Activated B cell treated with CpG ODN at 0.5 μM for 24 hours (primary cell): ENCODE measurements at regions of chr6 and their contacts with region 1.

Region 1: GRCh38 chr6:27177485-27178406 is 69.8 kb upstream of the PRSS16 start:
- DNase-seq: peak; percentile 64
- ATAC-seq: peak; percentile 82
- H3K4me3 Mint-ChIP-seq: peak overlapping the region; percentile 98
- H3K27ac Mint-ChIP-seq: peak overlapping the region; percentile 92
- H3K4me1 Mint-ChIP-seq: peaks cover 12% of the 10 kb centered on the region
- H3K27me3 Mint-ChIP-seq: peaks cover 5% of the 10 kb centered on the region
- CTCF ChIP-seq: no peak

Region 2: GRCh38 chr6:26537846-26538571 is 639.7 kb before region 1 on chr6 and contains the start of gene HMGN4:
- CTCF ChIA-PET with region 1: no interaction called
- POLR2A ChIA-PET with region 1: no interaction called
- intact Hi-C with region 1: loop called (anchors 1 kb)
- DNase-seq: peak; percentile 73
- ATAC-seq: peak; percentile 67
- H3K4me3 Mint-ChIP-seq: peak within 1 kb of the TSS; percentile 98
- H3K27ac Mint-ChIP-seq: peak within 1 kb of the TSS; percentile 97
- H3K4me1 Mint-ChIP-seq: peaks cover 65% of the 10 kb centered on the region
- H3K27me3 Mint-ChIP-seq: peaks cover 7% of the 10 kb centered on the region
- CTCF ChIP-seq: no peak
- total RNA-seq, gene HMGN4: 74.5 and 82.2 TPM in 2 replicates

Region 3: DNA sequence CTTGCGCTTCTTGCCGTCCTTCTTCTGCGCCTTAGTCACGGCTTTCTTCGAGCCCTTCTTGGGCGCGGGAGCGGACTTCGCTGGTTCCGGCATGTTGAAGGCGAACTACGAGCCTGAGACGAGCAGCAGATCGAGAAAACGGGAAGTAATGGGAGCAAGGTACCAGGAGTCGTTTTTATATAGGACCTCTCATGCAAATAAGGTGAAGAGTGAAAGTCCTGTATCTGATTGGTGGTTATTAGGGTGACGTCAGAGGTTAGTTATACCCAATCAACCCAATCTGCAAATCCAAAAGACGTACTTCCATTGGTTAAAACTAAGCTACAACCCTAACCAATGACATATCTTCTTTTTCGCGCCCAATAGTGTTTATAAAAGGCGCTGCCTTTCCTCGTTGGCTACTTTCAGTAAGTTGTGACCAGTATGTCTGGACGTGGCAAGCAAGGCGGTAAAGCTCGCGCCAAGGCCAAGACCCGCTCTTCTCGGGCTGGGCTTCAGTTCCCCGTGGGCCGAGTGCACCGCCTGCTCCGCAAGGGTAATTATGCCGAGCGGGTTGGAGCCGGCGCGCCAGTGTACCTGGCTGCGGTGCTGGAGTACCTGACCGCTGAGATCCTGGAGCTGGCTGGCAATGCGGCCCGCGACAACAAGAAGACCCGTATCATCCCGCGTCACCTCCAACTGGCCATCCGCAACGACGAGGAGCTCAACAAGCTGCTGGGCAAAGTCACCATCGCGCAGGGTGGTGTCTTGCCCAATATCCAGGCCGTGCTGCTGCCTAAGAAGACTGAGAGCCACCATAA is 30.8 kb before region 1 on chr6:
- CTCF ChIA-PET with region 1: interaction called, 3 read pairs
- POLR2A ChIA-PET with region 1: interaction called, 64 read pairs
- intact Hi-C with region 1: no loop called
- DNase-seq: peak; percentile 70
- ATAC-seq: peak; percentile 80
- H3K4me3 Mint-ChIP-seq: no peak overlapping the region
- H3K27ac Mint-ChIP-seq: no peak overlapping the region
- H3K4me1 Mint-ChIP-seq: peaks cover 26% of the 10 kb centered on the region
- H3K27me3 Mint-ChIP-seq: no peaks in the 10 kb centered on the region
- CTCF ChIP-seq: no peak

Region 4: DNA sequence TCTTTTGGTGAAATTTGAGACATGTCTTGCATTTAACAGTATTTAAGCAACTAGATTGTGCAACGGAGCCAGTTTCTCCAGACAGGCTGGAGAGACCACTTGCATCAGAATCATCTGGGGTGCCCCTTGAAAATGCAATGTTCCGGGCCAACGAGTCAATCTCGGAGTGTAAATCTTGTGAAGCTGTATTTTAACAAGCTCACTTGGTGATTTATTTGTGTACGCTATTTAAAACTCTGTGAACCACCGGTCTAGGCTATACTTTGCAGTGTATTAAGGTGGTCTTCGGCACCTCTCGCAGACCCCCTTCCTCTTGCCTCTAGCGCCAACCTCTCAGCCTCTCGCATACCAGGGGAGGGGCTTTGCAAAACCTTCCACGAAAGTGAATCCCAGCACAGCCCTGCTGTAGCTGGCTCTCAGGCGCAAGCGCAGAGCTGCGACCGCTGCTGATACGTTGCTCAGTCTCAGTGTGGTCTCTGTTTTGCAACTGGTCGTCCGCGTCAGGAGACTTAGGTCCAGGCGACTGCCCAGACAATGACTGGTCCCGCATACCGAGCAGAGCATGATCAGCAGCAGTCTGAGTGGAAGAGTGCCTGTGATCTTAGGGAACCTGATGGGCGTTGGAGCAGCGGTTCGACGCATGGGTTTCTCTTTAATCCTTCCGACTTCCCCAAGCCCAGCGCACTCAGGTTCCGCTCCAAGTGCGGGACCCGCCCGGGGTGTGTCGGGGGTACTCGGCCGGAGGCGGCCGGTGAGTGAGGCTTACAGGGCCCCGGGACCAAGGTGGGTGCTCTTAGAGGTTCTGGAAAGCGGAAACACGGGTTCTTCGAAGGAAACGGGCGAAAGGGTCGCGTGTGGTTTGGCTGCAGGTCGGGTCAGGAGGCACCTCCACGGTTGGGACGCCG is 210.8 kb after region 1 on chr6 and contains the start of gene ZNF391:
- CTCF ChIA-PET with region 1: no interaction called
- POLR2A ChIA-PET with region 1: no interaction called
- intact Hi-C with region 1: loop called (anchors 2 kb)
- DNase-seq: peak; percentile 73
- ATAC-seq: peak; percentile 88
- H3K4me3 Mint-ChIP-seq: peak within 1 kb of the TSS; percentile 97
- H3K27ac Mint-ChIP-seq: peak within 1 kb of the TSS; percentile 95
- H3K4me1 Mint-ChIP-seq: peaks cover 13% of the 10 kb centered on the region
- H3K27me3 Mint-ChIP-seq: no peaks in the 10 kb centered on the region
- CTCF ChIP-seq: no peak
- total RNA-seq, gene ZNF391: 4.8 and 5.9 TPM in 2 replicates

Region 5: DNA sequence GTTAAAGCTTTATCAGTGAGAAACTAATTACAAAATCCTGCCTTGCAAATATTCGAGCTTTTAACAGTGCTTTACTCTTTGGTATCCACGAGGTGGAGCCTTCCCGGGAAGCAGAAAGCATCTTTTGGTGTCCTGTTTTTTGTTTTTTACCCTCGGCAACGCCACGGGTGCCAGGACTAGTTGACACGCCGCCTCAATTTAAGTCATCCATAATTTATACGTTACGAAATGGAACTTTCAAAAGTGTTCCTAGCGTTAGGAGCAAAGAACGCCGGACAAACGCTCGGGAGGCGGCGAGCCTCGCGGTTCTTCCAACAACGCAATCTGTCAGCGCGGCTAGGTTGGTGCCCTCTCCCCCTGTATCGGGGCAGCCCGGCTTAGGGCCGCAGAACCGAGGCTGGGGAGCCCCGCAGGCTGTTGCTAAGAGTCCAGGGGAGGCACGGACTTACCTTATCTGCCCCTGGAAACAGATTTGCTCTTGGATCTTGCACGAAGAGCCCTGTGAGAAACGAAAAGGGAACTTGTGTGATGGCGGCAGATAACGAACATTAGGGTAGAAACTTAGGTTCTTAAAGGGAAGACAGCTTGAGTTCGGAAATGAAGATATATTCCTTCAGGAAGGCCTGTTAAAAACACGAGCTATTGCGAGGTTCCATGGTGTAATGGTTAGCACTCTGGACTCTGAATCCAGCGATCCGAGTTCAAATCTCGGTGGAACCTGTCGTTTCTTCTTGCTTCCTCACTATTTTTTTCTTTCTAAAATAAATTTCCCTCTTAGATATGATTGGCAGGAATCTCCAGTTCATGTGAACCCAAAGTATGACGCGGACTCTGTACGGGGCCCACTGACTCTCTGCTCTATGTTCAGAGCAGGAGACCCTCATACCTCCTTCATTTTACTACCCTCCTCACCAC is 341.4 kb after region 1 on chr6:
- CTCF ChIA-PET with region 1: interaction called, 3 read pairs
- POLR2A ChIA-PET with region 1: no interaction called
- intact Hi-C with region 1: loop called (anchors 5 kb)
- DNase-seq: peak; percentile 48
- ATAC-seq: peak; percentile 72
- H3K4me3 Mint-ChIP-seq: peak overlapping the region; percentile 83
- H3K27ac Mint-ChIP-seq: peak overlapping the region; percentile 82
- H3K4me1 Mint-ChIP-seq: peaks cover 15% of the 10 kb centered on the region
- H3K27me3 Mint-ChIP-seq: peaks cover 30% of the 10 kb centered on the region
- CTCF ChIP-seq: no peak

Region 6: GRCh38 chr6:27809939-27810767 is 632.4 kb after region 1 on chr6:
- CTCF ChIA-PET with region 1: interaction called, 4 read pairs
- POLR2A ChIA-PET with region 1: interaction called, 39 read pairs
- intact Hi-C with region 1: no loop called
- DNase-seq: peak; percentile 68
- ATAC-seq: peak; percentile 59
- H3K4me3 Mint-ChIP-seq: peak overlapping the region; percentile 93
- H3K27ac Mint-ChIP-seq: peak overlapping the region; percentile 97
- H3K4me1 Mint-ChIP-seq: peaks cover 59% of the 10 kb centered on the region
- H3K27me3 Mint-ChIP-seq: no peaks in the 10 kb centered on the region
- CTCF ChIP-seq: no peak

Region 7: DNA sequence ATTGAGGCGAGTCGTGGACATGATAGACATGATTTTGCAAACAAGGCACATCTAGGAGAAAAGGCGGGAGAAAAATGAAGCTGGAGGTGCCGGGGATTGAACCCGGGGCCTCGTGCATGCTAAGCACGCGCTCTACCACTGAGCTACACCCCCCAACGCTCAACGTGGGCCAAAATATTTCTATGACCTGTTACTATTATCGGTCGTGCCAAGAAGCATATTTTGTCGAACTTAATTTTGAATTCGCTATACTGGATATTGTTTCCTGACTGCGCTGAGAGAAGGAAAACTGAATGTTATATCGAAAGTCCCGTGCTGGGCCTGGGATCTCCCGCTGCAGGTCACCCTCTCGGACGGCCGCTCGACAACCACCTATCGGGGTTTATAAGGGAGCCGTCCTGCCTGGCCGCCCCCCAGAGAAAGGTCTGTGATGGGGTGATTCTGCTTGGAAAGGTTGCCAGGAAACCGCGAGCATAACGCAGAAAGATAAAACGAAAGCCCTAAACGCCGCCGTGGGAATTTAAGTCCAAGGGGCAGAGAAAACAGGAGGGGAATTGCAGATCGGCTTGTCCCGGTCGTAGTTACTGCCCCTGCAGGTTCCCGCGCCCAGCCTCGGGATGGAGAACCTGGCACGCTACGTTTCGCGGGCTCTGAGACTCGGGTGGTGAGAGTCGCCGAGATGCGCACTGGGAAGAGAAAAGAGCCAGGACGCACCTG is 1686.0 kb after region 1 on chr6:
- CTCF ChIA-PET with region 1: interaction called, 3 read pairs
- POLR2A ChIA-PET with region 1: interaction called, 5 read pairs
- intact Hi-C with region 1: loop called (anchors 10 kb)
- DNase-seq: peak; percentile 54
- ATAC-seq: peak; percentile 30
- H3K4me3 Mint-ChIP-seq: peak overlapping the region; percentile 85
- H3K27ac Mint-ChIP-seq: peak overlapping the region; percentile 90
- H3K4me1 Mint-ChIP-seq: peaks cover 27% of the 10 kb centered on the region
- H3K27me3 Mint-ChIP-seq: peaks cover 4% of the 10 kb centered on the region
- CTCF ChIP-seq: no peak